ENCODE measurements at regions of chr15 and their contacts with region 1.

Region 1: GRCh38 chr15:74642729-74643367 is 27.2 kb downstream of the CLK3 start:
- DNase-seq: no peak
- ATAC-seq: no peak
- H3K4me3 Mint-ChIP-seq: no peak overlapping the region
- H3K27ac Mint-ChIP-seq: peak overlapping the region; percentile 35
- H3K4me1 Mint-ChIP-seq: peaks cover 20% of the 10 kb centered on the region
- H3K27me3 Mint-ChIP-seq: no peaks in the 10 kb centered on the region
- CTCF ChIP-seq: no peak

Region 2: DNA sequence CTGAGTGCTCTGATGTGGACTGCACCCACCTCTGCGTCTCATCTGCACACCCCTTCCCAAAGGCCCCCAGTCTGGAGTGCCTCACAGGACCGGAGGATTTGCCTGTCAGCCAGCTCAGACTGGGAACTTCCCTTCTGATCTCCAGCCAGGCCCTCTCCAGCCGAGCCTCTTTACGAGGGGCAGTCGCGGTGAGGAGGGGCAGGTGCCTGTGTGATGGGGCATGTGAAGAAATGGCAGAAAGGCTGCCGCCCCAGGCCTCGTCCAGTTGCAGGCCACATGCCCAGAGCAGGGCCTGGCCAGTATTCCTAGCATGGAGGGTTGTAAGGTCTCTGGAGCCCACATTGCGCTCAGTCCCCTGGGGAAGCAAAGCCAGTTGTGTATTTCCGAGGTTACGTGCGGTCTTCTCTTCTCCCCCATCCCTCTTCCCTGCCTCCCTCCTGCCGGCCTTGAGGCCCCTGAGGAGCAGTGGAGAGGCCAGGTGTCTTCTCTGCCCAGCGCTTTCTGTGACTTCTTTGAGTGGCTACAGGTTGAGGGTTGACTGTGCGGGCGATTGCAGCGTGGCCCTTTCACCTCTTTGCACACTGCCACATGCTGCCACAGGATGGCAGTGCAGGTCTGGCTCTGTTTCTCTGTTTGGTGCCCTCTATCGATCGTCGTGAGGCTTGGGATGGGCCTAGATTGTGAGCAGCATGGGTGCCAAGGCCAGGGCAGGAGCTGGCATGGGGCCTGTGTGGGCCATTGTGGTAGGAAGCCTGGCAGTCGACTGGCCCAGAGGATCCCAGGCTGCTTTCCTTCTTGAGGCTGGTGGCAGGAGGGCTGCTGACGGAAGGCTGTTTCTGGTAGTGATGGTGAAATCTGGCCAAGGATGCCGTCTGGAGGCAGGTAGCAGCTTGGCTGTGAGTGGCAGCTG is 22.0 kb before region 1 on chr15:
- CTCF ChIA-PET with region 1: interaction called, 203 read pairs
- POLR2A ChIA-PET with region 1: interaction called, 3 read pairs
- intact Hi-C with region 1: no loop called
- DNase-seq: peak; percentile 89
- ATAC-seq: peak; percentile 96
- H3K4me3 Mint-ChIP-seq: no peak overlapping the region
- H3K27ac Mint-ChIP-seq: peak overlapping the region; percentile 77
- H3K4me1 Mint-ChIP-seq: peaks cover 60% of the 10 kb centered on the region
- H3K27me3 Mint-ChIP-seq: no peaks in the 10 kb centered on the region
- CTCF ChIP-seq: peak; percentile 98

Region 3: GRCh38 chr15:74716644-74717043 is 73.8 kb after region 1 on chr15:
- CTCF ChIA-PET with region 1: no interaction called
- POLR2A ChIA-PET with region 1: no interaction called
- intact Hi-C with region 1: no loop called
- DNase-seq: no peak
- ATAC-seq: no peak
- H3K4me3 Mint-ChIP-seq: no peak overlapping the region
- H3K27ac Mint-ChIP-seq: no peak overlapping the region
- H3K4me1 Mint-ChIP-seq: no peaks in the 10 kb centered on the region
- H3K27me3 Mint-ChIP-seq: no peaks in the 10 kb centered on the region
- CTCF ChIP-seq: no peak

Region 4: GRCh38 chr15:74730619-74731316 is 87.9 kb after region 1 on chr15:
- CTCF ChIA-PET with region 1: no interaction called
- POLR2A ChIA-PET with region 1: no interaction called
- intact Hi-C with region 1: no loop called
- DNase-seq: no peak
- ATAC-seq: no peak
- H3K4me3 Mint-ChIP-seq: no peak overlapping the region
- H3K27ac Mint-ChIP-seq: no peak overlapping the region
- H3K4me1 Mint-ChIP-seq: peaks cover 7% of the 10 kb centered on the region
- H3K27me3 Mint-ChIP-seq: peaks cover 30% of the 10 kb centered on the region
- CTCF ChIP-seq: no peak

Region 5: GRCh38 chr15:74913041-74913440 is 270.2 kb after region 1 on chr15:
- CTCF ChIA-PET with region 1: no interaction called
- POLR2A ChIA-PET with region 1: no interaction called
- intact Hi-C with region 1: no loop called
- DNase-seq: no peak
- ATAC-seq: no peak
- H3K4me3 Mint-ChIP-seq: no peak overlapping the region
- H3K27ac Mint-ChIP-seq: no peak overlapping the region
- H3K4me1 Mint-ChIP-seq: no peaks in the 10 kb centered on the region
- H3K27me3 Mint-ChIP-seq: no peaks in the 10 kb centered on the region
- CTCF ChIP-seq: no peak

Measured in activated CD8-positive, alpha-beta T cell treated with anti-CD3 and anti-CD28 coated beads for 36 hours (primary cell).